BJ (cell line): ENCODE measurements at regions of chr18 and their contacts with region 1.

Region 1: DNA sequence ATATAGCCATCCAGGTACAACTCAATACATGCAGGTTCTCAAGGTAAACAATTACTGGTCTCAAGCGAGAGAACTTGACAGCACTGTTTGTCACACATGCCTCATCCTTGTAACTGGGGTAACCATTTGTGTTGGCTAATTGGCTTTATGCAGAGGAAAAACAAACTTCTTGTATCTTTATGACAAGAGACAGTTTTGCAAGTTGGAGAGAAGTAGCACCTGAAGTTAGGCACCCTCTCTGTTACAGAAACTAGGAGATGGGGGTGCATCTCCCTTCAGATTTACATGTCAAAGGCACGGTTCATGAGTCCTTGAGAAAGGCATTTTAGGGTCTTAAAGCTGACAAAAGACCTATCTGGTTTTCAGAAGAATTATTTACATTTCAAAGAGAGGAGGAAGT is 241.7 kb downstream of the CD226 start:
- DNase-seq: no peak
- H3K4me3 ChIP-seq: no peak overlapping the region
- H3K27me3 ChIP-seq: no peaks in the 10 kb centered on the region
- CTCF ChIP-seq: no peak

Region 2: GRCh38 chr18:69495338-69495737 is 210.6 kb before region 1 on chr18:
- CTCF ChIA-PET with region 1: no interaction called
- POLR2A ChIA-PET with region 1: no interaction called
- DNase-seq: no peak
- H3K4me3 ChIP-seq: no peak overlapping the region
- H3K27me3 ChIP-seq: no peaks in the 10 kb centered on the region
- CTCF ChIP-seq: no peak

Region 3: DNA sequence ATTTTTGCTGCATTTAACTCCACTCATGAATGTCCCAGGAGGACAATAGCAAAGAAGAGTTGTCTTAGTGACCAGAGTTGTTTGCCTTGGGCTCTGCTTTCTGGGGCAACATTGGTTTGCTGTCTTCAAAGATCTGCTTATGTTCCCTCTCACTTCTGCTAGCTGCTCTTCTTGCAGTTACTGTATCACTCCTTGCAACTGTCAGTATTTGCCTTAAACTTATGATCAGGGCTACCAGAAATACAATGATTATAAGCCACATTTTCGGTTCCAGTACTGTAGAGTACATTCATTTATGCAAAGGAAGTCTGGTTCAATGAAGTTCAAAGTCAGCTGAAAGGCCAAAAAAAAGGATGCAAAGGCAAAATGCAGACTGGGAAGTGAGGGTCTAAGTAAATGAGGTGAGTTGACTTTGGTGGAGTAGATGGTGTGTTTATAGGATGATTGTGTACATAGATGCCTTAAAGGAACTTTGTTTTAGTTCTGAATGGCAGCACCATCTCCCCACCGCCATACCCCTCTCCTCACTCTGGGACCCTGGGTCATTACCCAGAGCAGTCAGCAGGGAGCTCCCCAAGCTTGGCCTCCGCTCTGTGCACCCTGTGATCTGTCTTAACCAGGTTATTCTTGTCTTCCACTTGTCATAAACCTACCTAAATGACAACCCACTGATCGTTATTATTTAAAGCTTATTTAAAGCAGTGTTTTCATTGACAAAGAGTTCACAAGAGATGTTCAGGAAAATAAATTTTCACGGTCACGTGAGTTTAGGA is 69.3 kb before region 1 on chr18:
- CTCF ChIA-PET with region 1: no interaction called
- POLR2A ChIA-PET with region 1: interaction called, 14 read pairs
- DNase-seq: no peak
- H3K4me3 ChIP-seq: no peak overlapping the region
- H3K27me3 ChIP-seq: no peaks in the 10 kb centered on the region
- CTCF ChIP-seq: peak; percentile 20; the same call in 1 of the 2 replicates

Region 4: DNA sequence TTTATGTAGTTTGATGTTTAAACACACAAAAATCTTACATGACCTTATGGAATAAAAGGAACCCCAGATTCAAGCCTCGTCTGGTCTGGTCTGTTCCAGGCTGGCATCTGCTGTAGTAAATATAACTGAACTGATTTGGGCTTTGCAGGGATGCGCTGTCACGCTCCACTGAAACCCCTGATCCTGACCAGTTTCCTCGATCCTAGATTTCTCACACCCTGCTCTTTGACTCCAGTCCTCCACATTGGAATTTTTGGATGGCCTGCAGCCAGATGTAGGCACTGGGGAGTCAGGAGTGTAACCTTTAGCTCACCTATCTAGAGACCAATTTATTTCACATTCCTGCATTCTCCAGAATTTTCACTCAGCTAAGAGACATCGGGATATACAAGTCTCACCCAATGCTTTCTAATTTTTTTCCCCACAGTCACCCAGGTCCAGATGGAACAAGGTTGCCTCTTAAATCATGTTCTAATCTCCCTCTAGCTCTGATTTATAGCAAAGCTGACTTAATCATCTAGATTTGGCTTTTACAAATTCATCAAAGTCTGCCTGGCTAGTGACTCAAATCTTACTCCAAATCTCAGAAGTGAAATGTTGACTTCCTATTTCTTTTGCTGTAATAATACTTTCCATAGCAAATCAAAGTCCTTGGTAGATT is 22.1 kb after region 1 on chr18:
- CTCF ChIA-PET with region 1: no interaction called
- POLR2A ChIA-PET with region 1: no interaction called
- DNase-seq: no peak
- H3K4me3 ChIP-seq: no peak overlapping the region
- H3K27me3 ChIP-seq: no peaks in the 10 kb centered on the region
- CTCF ChIP-seq: no peak